Activated CD4-positive, alpha-beta memory T cell treated with anti-CD3 and anti-CD28 coated beads for 36 hours (primary cell): ENCODE measurements at regions of chr4 and their contacts with region 1.

Region 1: DNA sequence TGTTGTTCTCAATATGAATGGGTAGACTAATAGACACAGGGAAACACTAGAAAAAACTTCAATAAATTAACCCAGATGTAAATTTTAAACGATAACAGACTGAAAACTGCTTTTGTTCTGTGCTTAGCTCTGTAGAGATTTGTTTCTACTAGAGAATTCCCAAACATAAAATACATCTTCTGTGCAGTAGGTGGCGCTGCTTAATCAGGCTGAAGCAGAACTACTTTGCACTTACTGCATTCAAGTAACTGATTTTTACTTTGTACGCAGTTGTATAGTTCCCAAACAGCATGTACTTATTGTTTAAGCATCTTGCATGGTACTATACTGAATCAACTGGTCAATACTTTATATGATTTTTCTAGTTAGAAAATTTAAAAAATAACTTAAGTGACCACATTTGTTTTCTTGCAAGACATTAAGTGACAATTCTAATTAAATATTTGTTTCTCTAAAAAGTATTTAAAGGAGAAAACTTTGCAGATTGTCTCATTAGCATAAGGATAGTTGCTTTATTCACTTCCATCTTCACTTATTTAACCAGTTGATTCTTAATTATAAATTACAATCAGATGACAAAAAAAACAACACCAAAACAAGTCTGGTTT is 490.6 kb downstream of the IL15 start:
- DNase-seq: peak; percentile 68
- H3K4me3 Mint-ChIP-seq: no peak overlapping the region
- H3K27ac Mint-ChIP-seq: no peak overlapping the region
- H3K4me1 Mint-ChIP-seq: peaks cover 26% of the 10 kb centered on the region
- H3K27me3 Mint-ChIP-seq: no peaks in the 10 kb centered on the region

Region 2: DNA sequence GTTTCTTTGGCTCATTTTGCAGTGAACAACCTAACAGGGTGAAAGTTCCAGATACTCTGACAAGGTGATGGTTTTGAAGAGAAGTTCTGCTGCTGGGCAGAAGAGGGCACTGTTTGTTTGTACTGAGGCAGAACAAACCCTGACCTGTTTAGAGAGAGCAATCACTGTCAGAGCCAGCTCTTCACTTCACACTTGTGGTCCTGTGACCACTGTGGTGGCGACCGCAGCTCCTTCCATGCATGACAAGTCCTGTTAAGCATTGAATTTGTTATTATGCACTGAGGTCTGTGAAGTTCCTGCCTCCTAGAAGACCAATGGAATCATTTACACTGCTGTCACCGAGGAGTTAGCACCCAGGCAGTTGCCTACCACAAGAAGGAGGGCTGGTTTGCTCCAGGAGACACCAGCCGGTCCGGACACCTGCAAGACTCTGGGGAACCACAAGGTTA is 819.7 kb before region 1 on chr4:
- CTCF ChIA-PET with region 1: no interaction called
- POLR2A ChIA-PET with region 1: no interaction called
- intact Hi-C with region 1: loop called (anchors 10 kb)
- DNase-seq: peak; percentile 84
- H3K4me3 Mint-ChIP-seq: no peak overlapping the region
- H3K27ac Mint-ChIP-seq: no peak overlapping the region
- H3K4me1 Mint-ChIP-seq: peaks cover 3% of the 10 kb centered on the region
- H3K27me3 Mint-ChIP-seq: peaks cover 3% of the 10 kb centered on the region

Region 3: GRCh38 chr4:142719854-142720541 is 593.0 kb after region 1 on chr4:
- CTCF ChIA-PET with region 1: interaction called, 3 read pairs
- POLR2A ChIA-PET with region 1: no interaction called
- intact Hi-C with region 1: loop called (anchors 1 kb)
- DNase-seq: no peak
- H3K4me3 Mint-ChIP-seq: no peak overlapping the region
- H3K27ac Mint-ChIP-seq: peak overlapping the region; percentile 69
- H3K4me1 Mint-ChIP-seq: peaks cover 28% of the 10 kb centered on the region
- H3K27me3 Mint-ChIP-seq: no peaks in the 10 kb centered on the region

Region 4: DNA sequence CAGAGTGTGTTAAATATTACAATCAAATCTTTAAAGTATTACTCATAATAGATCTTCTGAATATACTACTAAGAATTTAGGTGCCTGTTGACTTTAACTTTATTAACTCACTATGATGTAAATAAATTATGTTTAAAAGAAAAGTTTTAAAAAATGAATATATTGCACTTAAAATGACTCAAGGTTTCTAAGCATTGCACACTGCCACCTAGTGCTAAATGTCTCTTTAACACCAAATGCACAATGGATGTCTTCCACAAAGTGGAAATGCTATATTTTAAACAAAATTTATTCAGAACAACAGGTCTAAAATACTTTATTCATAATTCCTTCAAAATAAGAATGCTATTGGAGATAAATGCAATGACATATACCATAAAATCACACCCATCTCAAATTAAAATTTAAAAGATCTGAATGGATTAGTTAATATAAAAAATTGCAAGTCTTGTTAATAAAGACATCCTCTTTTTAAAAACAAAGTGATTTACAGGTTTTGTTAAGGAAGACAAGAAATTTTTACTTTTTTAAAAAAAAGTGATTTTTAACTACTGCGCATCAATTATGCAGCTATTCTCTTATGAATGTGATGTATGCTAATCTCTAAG is 713.6 kb after region 1 on chr4:
- CTCF ChIA-PET with region 1: interaction called, 5 read pairs
- POLR2A ChIA-PET with region 1: no interaction called
- intact Hi-C with region 1: loop called (anchors 1 kb)
- DNase-seq: no peak
- H3K4me3 Mint-ChIP-seq: no peak overlapping the region
- H3K27ac Mint-ChIP-seq: no peak overlapping the region
- H3K4me1 Mint-ChIP-seq: peaks cover 21% of the 10 kb centered on the region
- H3K27me3 Mint-ChIP-seq: peaks cover 2% of the 10 kb centered on the region